Activated CD4-positive, alpha-beta T cell treated with anti-CD3 and anti-CD28 coated beads, Interleukin-2, amount 10 ng/mL, durations not matched to agents 7 days and 5 days (primary cell): ENCODE measurements at regions of chr2 and their contacts with region 1.

Region 1: GRCh38 chr2:30293303-30293921 is 62.1 kb downstream of the LBH start:
- DNase-seq: no peak
- H3K4me3 Mint-ChIP-seq: no peak overlapping the region
- H3K27ac Mint-ChIP-seq: no peak overlapping the region
- H3K4me1 Mint-ChIP-seq: peaks cover 4% of the 10 kb centered on the region
- H3K27me3 Mint-ChIP-seq: no peaks in the 10 kb centered on the region

Region 2: DNA sequence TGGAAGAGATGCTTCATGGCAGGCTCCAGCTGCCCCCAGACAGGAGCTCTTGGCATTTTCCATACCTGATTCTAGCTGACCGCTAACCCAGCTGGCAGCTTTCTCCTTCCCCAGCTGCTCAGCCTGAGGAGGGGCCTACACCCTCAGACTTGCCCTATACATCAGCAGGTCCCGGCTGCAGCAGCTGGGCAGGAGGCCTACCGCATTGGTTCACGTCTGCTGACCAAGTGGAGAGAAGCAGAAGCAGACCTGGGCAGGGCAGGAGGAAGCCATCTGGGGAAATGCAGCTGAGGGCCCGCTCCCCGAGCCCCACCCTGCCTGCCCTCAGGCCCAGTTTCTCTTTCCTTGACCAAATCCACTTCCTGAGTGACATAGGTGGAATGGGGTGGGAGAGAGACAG is 11.3 kb before region 1 on chr2:
- CTCF ChIA-PET with region 1: interaction called, 10 read pairs
- POLR2A ChIA-PET with region 1: no interaction called
- DNase-seq: no peak
- H3K4me3 Mint-ChIP-seq: no peak overlapping the region
- H3K27ac Mint-ChIP-seq: no peak overlapping the region
- H3K4me1 Mint-ChIP-seq: peaks cover 19% of the 10 kb centered on the region
- H3K27me3 Mint-ChIP-seq: peaks cover 1% of the 10 kb centered on the region

Region 3: GRCh38 chr2:30321466-30321865 is 28.1 kb after region 1 on chr2:
- CTCF ChIA-PET with region 1: no interaction called
- POLR2A ChIA-PET with region 1: no interaction called
- DNase-seq: no peak
- H3K4me3 Mint-ChIP-seq: no peak overlapping the region
- H3K27ac Mint-ChIP-seq: no peak overlapping the region
- H3K4me1 Mint-ChIP-seq: peaks cover 19% of the 10 kb centered on the region
- H3K27me3 Mint-ChIP-seq: no peaks in the 10 kb centered on the region

Region 4: GRCh38 chr2:30334762-30335363 is 41.5 kb after region 1 on chr2:
- CTCF ChIA-PET with region 1: no interaction called
- POLR2A ChIA-PET with region 1: no interaction called
- DNase-seq: peak; percentile 12
- H3K4me3 Mint-ChIP-seq: no peak overlapping the region
- H3K27ac Mint-ChIP-seq: peak overlapping the region; percentile 99
- H3K4me1 Mint-ChIP-seq: peaks cover 83% of the 10 kb centered on the region
- H3K27me3 Mint-ChIP-seq: no peaks in the 10 kb centered on the region